ENCODE measurements at regions of chr15 and their contacts with region 1.

Region 1: GRCh38 chr15:90886041-90886614 is 1.8 kb downstream of the FES start:
- DNase-seq: no peak
- ATAC-seq: peak; percentile 73
- H3K4me3 ChIP-seq: no peak overlapping the region
- H3K27ac ChIP-seq: no peak overlapping the region
- H3K4me1 ChIP-seq: no peaks in the 10 kb centered on the region
- H3K27me3 ChIP-seq: no peaks in the 10 kb centered on the region
- CTCF ChIP-seq: peak; percentile 99

Region 2: DNA sequence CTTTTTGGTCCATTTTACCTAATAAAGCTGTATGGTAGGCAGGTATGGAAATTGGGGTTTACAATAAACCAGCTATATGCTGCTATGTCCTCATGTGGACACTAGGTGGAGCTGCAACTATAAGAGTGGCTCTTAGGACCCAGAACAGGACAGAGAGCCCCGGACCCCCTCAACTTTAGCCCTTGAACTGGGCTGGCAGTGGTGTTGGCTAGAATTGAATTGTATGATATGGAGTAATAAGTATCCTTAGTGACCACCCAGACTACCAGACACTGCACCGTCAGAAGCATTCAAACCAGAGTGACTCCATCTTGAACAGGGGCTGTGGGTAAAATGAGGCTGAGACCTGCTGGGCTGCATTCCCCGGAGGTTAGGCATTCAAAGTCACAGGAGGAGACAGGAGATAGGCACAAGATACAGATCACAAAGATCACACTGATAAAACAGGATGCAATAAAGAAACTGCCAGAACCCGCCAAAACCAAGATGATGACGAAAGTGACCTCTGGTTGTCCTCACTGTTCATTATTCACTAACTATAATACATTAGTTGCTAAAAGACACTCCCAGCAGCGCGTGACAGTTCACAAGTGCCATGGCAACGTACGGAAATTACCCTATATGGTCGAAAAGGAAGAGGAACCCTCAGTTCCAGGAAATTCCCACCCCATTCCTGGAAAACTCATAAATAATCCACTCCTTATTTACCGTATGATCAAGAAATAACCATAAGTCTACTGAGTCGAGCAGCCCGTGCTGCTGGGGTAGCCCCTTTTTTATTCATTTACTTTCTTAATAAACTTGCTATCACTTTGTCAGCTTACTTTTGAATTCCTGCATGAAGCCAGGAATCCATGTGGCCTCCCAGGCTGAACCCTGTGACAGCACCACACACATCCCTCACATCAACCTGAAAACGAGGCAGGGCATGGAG is 237.7 kb before region 1 on chr15:
- CTCF ChIA-PET with region 1: interaction called, 8 read pairs
- POLR2A ChIA-PET with region 1: no interaction called
- in situ Hi-C with region 1: no loop called
- intact Hi-C with region 1: loop called (anchors 1 kb)
- DNase-seq: no peak
- ATAC-seq: peak; percentile 60
- H3K4me3 ChIP-seq: no peak overlapping the region
- H3K27ac ChIP-seq: no peak overlapping the region
- H3K4me1 ChIP-seq: peaks cover 8% of the 10 kb centered on the region
- H3K27me3 ChIP-seq: no peaks in the 10 kb centered on the region
- CTCF ChIP-seq: peak; percentile 95

Region 3: GRCh38 chr15:90845201-90845949 is 40.8 kb before region 1 on chr15:
- CTCF ChIA-PET with region 1: no interaction called
- POLR2A ChIA-PET with region 1: interaction called, 10 read pairs
- in situ Hi-C with region 1: no loop called
- intact Hi-C with region 1: no loop called
- DNase-seq: peak; percentile 54
- ATAC-seq: peak; percentile 86
- H3K4me3 ChIP-seq: no peak overlapping the region
- H3K27ac ChIP-seq: no peak overlapping the region
- H3K4me1 ChIP-seq: peaks cover 6% of the 10 kb centered on the region
- H3K27me3 ChIP-seq: no peaks in the 10 kb centered on the region
- CTCF ChIP-seq: no peak

Region 4: GRCh38 chr15:91271565-91272153 is 385.5 kb after region 1 on chr15:
- CTCF ChIA-PET with region 1: interaction called, 10 read pairs
- POLR2A ChIA-PET with region 1: no interaction called
- in situ Hi-C with region 1: no loop called
- intact Hi-C with region 1: no loop called
- DNase-seq: peak; percentile 52
- ATAC-seq: peak; percentile 92
- H3K4me3 ChIP-seq: no peak overlapping the region
- H3K27ac ChIP-seq: no peak overlapping the region
- H3K4me1 ChIP-seq: no peaks in the 10 kb centered on the region; the same call in 1 of the 2 replicates
- H3K27me3 ChIP-seq: peaks cover 11% of the 10 kb centered on the region; the same call in 1 of the 2 replicates
- CTCF ChIP-seq: peak; percentile 84

Measured in Panc1 (cell line).